ENCODE measurements at regions of chr13 and their contacts with region 1.

Region 1: GRCh38 chr13:98977568-98978265 is at the start of gene DOCK9:
- DNase-seq: peak; percentile 64 to 94 (median 85)

Region 2: GRCh38 chr13:98923641-98924397 is 53.9 kb before region 1 on chr13:
- intact Hi-C with region 1: loop called (anchors 5 kb)
- DNase-seq: no peak

Region 3: GRCh38 chr13:99033814-99034213 is 56.1 kb after region 1 on chr13:
- intact Hi-C with region 1: loop called (anchors 10 kb)
- DNase-seq: peak in 1 of 42 donors; percentile 17